Activated CD4-positive, alpha-beta memory T cell treated with anti-CD3 and anti-CD28 coated beads for 36 hours (primary cell): ENCODE measurements at regions of chr13 and their contacts with region 1.

Region 1: GRCh38 chr13:52665325-52665724 is 12.7 kb downstream of the SUGT1 start:
- DNase-seq: no peak
- H3K4me3 Mint-ChIP-seq: no peak overlapping the region
- H3K27ac Mint-ChIP-seq: no peak overlapping the region
- H3K4me1 Mint-ChIP-seq: peaks cover 2% of the 10 kb centered on the region
- H3K27me3 Mint-ChIP-seq: no peaks in the 10 kb centered on the region

Region 2: GRCh38 chr13:52695856-52696255 is 30.5 kb after region 1 on chr13:
- CTCF ChIA-PET with region 1: no interaction called
- POLR2A ChIA-PET with region 1: no interaction called
- intact Hi-C with region 1: loop called (anchors 1 kb)
- DNase-seq: peak; percentile 71
- H3K4me3 Mint-ChIP-seq: no peak overlapping the region
- H3K27ac Mint-ChIP-seq: peak overlapping the region; percentile 31
- H3K4me1 Mint-ChIP-seq: peaks cover 15% of the 10 kb centered on the region
- H3K27me3 Mint-ChIP-seq: no peaks in the 10 kb centered on the region

Region 3: GRCh38 chr13:52809310-52809769 is 144.0 kb after region 1 on chr13:
- CTCF ChIA-PET with region 1: interaction called, 14 read pairs
- POLR2A ChIA-PET with region 1: no interaction called
- intact Hi-C with region 1: loop called (anchors 2 kb)
- DNase-seq: peak; percentile 68
- H3K4me3 Mint-ChIP-seq: no peak overlapping the region
- H3K27ac Mint-ChIP-seq: no peak overlapping the region
- H3K4me1 Mint-ChIP-seq: peaks cover 4% of the 10 kb centered on the region
- H3K27me3 Mint-ChIP-seq: peaks cover 15% of the 10 kb centered on the region

Region 4: DNA sequence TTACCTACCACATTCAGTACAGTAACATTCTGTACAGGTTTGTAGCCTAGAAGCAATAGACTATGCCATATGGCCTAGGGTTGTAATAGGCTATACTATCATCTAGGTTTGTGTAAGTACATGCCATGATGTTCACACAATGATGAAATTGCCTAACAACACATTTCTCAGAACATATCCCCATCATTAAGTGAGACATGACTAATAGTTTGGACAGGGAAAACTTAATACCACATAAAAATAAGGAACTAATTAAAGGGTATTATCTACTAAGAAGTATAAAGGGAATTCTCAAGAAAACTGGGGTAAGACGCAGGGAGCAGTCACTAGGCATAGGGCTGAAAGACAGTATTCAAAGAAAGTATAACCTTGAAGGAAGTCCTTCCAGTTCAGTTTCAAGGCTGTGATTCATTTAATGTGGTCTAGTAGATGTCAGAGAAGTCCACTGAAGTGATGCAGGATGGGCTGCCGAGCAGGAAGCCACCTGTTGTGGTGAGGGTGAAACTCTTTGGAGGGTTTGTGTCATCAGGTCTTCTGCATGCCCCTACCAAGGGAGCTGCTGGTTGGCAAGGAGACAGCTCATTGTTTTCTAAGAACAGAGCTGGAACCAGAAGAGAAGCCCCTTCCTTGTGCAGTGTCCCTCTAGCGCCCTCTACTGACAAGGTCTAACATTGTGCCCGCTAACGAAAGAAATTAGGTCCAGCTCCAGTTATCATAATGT is 486.2 kb after region 1 on chr13:
- CTCF ChIA-PET with region 1: interaction called, 4 read pairs
- POLR2A ChIA-PET with region 1: no interaction called
- intact Hi-C with region 1: loop called (anchors 5 kb)
- DNase-seq: peak; percentile 53
- H3K4me3 Mint-ChIP-seq: no peak overlapping the region
- H3K27ac Mint-ChIP-seq: no peak overlapping the region
- H3K4me1 Mint-ChIP-seq: no peaks in the 10 kb centered on the region
- H3K27me3 Mint-ChIP-seq: peaks cover 12% of the 10 kb centered on the region

Region 5: GRCh38 chr13:53174545-53174944 is 509.2 kb after region 1 on chr13:
- CTCF ChIA-PET with region 1: no interaction called
- POLR2A ChIA-PET with region 1: no interaction called
- intact Hi-C with region 1: no loop called
- DNase-seq: no peak
- H3K4me3 Mint-ChIP-seq: no peak overlapping the region
- H3K27ac Mint-ChIP-seq: no peak overlapping the region
- H3K4me1 Mint-ChIP-seq: no peaks in the 10 kb centered on the region
- H3K27me3 Mint-ChIP-seq: peaks cover 5% of the 10 kb centered on the region